K562 (cell line): ENCODE measurements at regions of chr3 and their contacts with region 1.

Region 1: GRCh38 chr3:47628426-47628825 is 49.8 kb upstream of the CSPG5 start:
- DNase-seq: no peak
- ATAC-seq: no peak
- H3K4me3 ChIP-seq: no peak overlapping the region
- H3K27ac ChIP-seq: no peak overlapping the region
- H3K4me1 ChIP-seq: no peaks in the 10 kb centered on the region
- H3K27me3 ChIP-seq: no peaks in the 10 kb centered on the region
- CTCF ChIP-seq: no peak
- EP300 ChIP-seq: no peak
- POLR2A ChIP-seq: no peak
- RAD21 ChIP-seq: no peak

Region 2: DNA sequence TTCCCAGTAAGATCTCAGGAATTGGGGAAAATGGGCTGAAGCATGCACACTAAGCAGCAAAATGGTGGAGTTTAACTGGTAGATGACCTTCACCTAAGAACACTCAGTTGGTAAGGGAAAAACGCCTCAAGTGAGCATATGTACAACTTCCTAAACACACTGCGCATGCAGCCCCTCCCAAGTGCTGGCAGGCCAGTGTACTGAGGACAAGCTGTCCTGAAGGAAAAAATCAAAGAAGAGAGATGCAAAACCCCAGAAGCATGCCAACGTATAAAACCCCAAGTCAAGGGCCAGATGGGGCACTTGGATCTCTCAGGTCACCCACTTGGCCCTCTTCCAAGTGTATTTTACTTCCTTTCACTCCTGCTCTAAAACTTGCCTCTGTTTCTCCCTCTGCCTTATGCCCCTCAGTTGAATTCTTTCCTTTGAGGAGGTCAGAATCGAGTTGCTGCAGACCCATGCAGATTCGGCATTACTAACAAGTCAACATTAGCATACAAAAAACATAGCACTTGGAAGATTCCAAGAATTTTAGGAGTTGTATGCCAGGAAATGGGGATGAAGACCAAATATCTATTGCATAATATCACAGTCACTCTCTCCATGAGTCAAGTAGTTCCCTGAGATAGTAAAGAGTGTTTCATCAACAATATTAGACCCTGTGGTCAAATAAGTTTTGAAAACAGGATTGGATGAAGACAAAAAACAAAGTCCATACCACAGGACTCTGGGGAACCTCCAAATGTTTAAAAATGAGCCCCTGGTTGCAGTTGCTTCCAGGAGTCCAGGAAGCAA is 1622.0 kb before region 1 on chr3:
- CTCF ChIA-PET with region 1: no interaction called
- POLR2A ChIA-PET with region 1: no interaction called
- in situ Hi-C with region 1: no loop called
- intact Hi-C with region 1: no loop called
- DNase-seq: no peak
- ATAC-seq: no peak
- H3K4me3 ChIP-seq: no peak overlapping the region
- H3K27ac ChIP-seq: no peak overlapping the region
- H3K4me1 ChIP-seq: peaks cover 0 to 5% of the 10 kb centered on the region in 2 experiments; a peak in 2 of 5 replicates
- H3K27me3 ChIP-seq: peaks cover 12 to 32% of the 10 kb centered on the region in 2 experiments
- CTCF ChIP-seq: no peak
- EP300 ChIP-seq: no peak
- POLR2A ChIP-seq: no peak
- RAD21 ChIP-seq: no peak

Region 3: GRCh38 chr3:47565734-47566550 is 62.5 kb before region 1 on chr3:
- CTCF ChIA-PET with region 1: no interaction called
- POLR2A ChIA-PET with region 1: no interaction called
- in situ Hi-C with region 1: no loop called
- intact Hi-C with region 1: no loop called
- DNase-seq: peak in 2 of 4 experiments; percentile 44 to 51
- ATAC-seq: no peak; the same call in 2 of the 3 replicates
- H3K4me3 ChIP-seq: no peak overlapping the region
- H3K27ac ChIP-seq: no peak overlapping the region
- H3K4me1 ChIP-seq: peaks cover 9 to 12% of the 10 kb centered on the region in 2 experiments
- H3K27me3 ChIP-seq: no peaks in the 10 kb centered on the region
- CTCF ChIP-seq: no peak
- EP300 ChIP-seq: no peak
- POLR2A ChIP-seq: no peak
- RAD21 ChIP-seq: no peak

Region 4: GRCh38 chr3:47586746-47587145 is 41.7 kb before region 1 on chr3:
- CTCF ChIA-PET with region 1: no interaction called
- POLR2A ChIA-PET with region 1: no interaction called
- in situ Hi-C with region 1: no loop called
- intact Hi-C with region 1: no loop called
- DNase-seq: peak in 1 of 4 experiments; percentile 5
- ATAC-seq: no peak
- H3K4me3 ChIP-seq: no peak overlapping the region
- H3K27ac ChIP-seq: no peak overlapping the region
- H3K4me1 ChIP-seq: no peaks in the 10 kb centered on the region
- H3K27me3 ChIP-seq: no peaks in the 10 kb centered on the region
- CTCF ChIP-seq: no peak
- EP300 ChIP-seq: no peak
- POLR2A ChIP-seq: no peak
- RAD21 ChIP-seq: no peak

Region 5: DNA sequence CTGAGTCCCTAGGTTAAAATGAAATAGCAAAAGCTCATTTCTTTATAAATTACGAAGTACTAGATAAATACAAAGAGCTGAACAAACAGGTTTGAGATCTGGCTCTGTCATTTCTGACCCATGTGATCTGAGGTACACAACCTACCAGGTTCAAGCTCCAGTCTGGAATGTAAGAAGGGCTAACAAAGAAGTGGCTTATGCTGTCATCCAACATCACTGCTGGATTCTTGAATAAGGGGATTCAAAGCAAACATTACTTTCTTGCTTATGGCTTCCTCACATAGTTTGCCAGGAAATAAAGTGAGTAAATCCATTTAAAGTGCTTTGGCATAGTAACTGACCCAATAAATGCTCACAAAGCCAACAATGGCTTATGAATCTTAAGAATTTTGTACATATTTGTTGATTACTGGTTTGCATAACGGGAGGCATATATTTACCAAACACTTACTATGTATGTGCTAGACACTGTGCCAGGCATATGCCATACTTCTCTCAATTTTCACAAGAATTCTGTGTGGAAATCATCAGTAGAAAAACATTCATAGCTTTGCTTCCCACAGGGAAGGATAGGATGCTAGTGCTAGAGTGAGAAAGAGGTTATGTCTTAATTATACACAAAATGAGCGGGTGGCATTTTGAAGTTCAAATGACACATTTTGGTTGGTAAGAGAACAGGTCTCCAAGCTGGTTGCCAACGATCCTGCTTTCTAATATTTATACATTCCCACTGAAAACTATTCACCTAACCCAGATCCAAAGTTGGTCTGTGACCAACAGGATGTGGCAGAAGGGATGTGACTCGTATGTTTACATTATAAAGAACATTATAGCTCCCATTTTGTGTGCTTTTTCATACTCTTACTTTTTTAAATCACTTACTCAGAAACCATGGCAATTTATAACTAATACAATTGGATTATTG is 11.1 kb before region 1 on chr3:
- CTCF ChIA-PET with region 1: no interaction called
- POLR2A ChIA-PET with region 1: interaction called, 16 read pairs
- in situ Hi-C with region 1: no loop called
- intact Hi-C with region 1: no loop called
- DNase-seq: no peak
- ATAC-seq: no peak
- H3K4me3 ChIP-seq: no peak overlapping the region
- H3K27ac ChIP-seq: no peak overlapping the region
- H3K4me1 ChIP-seq: no peaks in the 10 kb centered on the region
- H3K27me3 ChIP-seq: no peaks in the 10 kb centered on the region
- CTCF ChIP-seq: no peak
- EP300 ChIP-seq: no peak
- POLR2A ChIP-seq: no peak
- RAD21 ChIP-seq: no peak

Region 6: DNA sequence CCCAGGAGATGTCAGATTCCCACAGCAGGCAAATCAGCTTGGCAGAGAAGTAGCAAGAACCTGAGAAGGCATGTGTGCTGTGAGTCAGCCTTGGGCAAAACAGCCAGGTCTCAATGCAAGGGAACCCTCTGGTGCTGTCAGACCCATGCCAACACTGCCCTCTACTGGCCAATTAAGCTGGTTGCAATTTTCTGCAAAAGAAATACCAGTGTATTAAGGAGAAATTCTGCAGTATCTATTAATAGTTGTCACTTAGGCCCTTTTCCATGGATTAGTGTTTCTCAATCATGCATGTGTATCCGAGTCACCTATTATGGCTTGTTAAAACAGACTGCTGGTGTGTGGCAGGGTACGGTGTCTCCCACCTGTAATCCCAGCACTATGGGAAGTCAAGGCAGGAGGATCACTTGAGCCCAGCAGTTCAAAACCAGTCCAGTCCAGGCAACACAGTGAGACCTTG is 361.6 kb after region 1 on chr3:
- CTCF ChIA-PET with region 1: no interaction called
- POLR2A ChIA-PET with region 1: no interaction called
- in situ Hi-C with region 1: no loop called
- intact Hi-C with region 1: no loop called
- DNase-seq: peak; percentile 78 to 89 (median 82)
- ATAC-seq: peak; percentile 98
- H3K4me3 ChIP-seq: no peak overlapping the region
- H3K27ac ChIP-seq: no peak overlapping the region
- H3K4me1 ChIP-seq: peaks cover 0 to 2% of the 10 kb centered on the region in 2 experiments; a peak in 1 of 5 replicates
- H3K27me3 ChIP-seq: no peaks in the 10 kb centered on the region
- CTCF ChIP-seq: peak; percentile 84 to 98 (median 97)
- EP300 ChIP-seq: no peak
- POLR2A ChIP-seq: no peak
- RAD21 ChIP-seq: peak; percentile 88 to 92